ENCODE measurements at regions of chrX and their contacts with region 1.

Region 1: GRCh38 chrX:41734530-41734929 is 10.5 kb downstream of the GPR82 start:
- DNase-seq: no peak
- ATAC-seq: peak; percentile 35
- H3K4me3 Mint-ChIP-seq: peak overlapping the region; percentile 75
- H3K27ac Mint-ChIP-seq: peak overlapping the region; percentile 85
- H3K4me1 Mint-ChIP-seq: peaks cover 41% of the 10 kb centered on the region
- H3K27me3 Mint-ChIP-seq: no peaks in the 10 kb centered on the region
- CTCF ChIP-seq: no peak

Region 2: GRCh38 chrX:40899869-40900268 is 834.7 kb before region 1 on chrX:
- CTCF ChIA-PET with region 1: no interaction called
- POLR2A ChIA-PET with region 1: no interaction called
- intact Hi-C with region 1: no loop called
- DNase-seq: no peak
- ATAC-seq: no peak
- H3K4me3 Mint-ChIP-seq: no peak overlapping the region
- H3K27ac Mint-ChIP-seq: no peak overlapping the region
- H3K4me1 Mint-ChIP-seq: no peaks in the 10 kb centered on the region
- H3K27me3 Mint-ChIP-seq: peaks cover 3% of the 10 kb centered on the region
- CTCF ChIP-seq: no peak

Region 3: DNA sequence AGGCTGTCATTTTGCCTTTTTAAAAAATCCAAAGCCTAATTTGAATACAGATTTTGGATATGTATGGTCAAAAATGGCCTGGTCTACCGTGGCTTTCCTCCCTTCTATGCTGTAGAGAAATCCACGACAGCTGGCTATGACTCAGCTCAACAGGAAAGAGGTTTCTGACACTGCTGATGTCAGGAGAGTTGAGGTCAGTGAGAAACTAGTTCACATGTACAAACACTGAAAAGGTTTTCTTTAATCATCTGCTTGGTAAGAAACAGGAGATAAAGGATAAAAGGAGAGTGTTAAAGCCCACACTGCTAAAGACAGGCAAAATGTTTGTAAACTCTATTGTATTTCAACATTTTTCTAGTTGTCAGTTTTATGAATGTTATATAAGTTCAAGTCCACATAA is 173.5 kb before region 1 on chrX:
- CTCF ChIA-PET with region 1: no interaction called
- POLR2A ChIA-PET with region 1: no interaction called
- intact Hi-C with region 1: loop called (anchors 1 kb)
- DNase-seq: no peak
- ATAC-seq: peak; percentile 57
- H3K4me3 Mint-ChIP-seq: no peak overlapping the region
- H3K27ac Mint-ChIP-seq: no peak overlapping the region
- H3K4me1 Mint-ChIP-seq: peaks cover 20% of the 10 kb centered on the region
- H3K27me3 Mint-ChIP-seq: no peaks in the 10 kb centered on the region
- CTCF ChIP-seq: no peak

Region 4: DNA sequence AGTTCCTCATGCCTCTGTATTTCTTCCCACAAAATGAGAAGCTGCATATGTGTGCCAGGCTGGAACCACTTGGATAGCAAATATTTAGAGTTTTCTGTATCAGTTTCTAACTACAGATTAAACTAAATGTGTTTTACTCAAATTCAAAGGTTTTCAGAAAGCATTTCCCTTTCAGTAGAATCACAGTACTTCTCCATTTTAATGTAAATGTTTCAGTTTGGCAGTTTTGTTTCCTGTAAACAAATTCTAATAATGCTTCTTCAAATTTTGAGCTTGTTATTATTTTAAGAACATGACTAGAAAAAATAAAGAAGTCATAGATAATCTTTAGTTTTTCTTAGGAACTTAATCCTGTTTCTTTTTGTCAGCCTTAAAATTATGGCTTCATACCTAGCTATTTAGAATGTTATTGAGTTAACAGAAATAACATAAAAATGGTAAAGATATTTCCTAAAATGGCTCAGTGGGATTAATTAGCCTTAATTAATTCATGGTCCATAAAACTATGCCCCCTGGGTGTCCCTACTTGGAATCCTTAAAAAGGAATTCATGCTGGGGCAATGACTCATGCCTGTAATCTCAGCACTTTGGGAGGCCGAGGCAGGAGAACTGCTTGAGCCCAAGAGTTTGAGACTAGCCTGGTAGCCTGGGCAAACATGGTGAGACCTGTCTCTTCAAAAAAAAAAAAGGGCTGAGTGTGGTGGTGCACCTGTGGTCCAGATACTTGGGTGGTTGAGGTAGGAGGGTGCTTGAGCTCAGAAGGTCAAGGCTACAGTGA is 129.6 kb before region 1 on chrX:
- CTCF ChIA-PET with region 1: no interaction called
- POLR2A ChIA-PET with region 1: no interaction called
- intact Hi-C with region 1: no loop called
- DNase-seq: no peak
- ATAC-seq: no peak
- H3K4me3 Mint-ChIP-seq: no peak overlapping the region
- H3K27ac Mint-ChIP-seq: peak overlapping the region; percentile 66
- H3K4me1 Mint-ChIP-seq: peaks cover 29% of the 10 kb centered on the region
- H3K27me3 Mint-ChIP-seq: no peaks in the 10 kb centered on the region
- CTCF ChIP-seq: no peak

Region 5: GRCh38 chrX:41670112-41670511 is 64.4 kb before region 1 on chrX:
- CTCF ChIA-PET with region 1: no interaction called
- POLR2A ChIA-PET with region 1: no interaction called
- intact Hi-C with region 1: loop called (anchors 5 kb)
- DNase-seq: no peak
- ATAC-seq: no peak
- H3K4me3 Mint-ChIP-seq: no peak overlapping the region
- H3K27ac Mint-ChIP-seq: no peak overlapping the region
- H3K4me1 Mint-ChIP-seq: peaks cover 10% of the 10 kb centered on the region
- H3K27me3 Mint-ChIP-seq: no peaks in the 10 kb centered on the region
- CTCF ChIP-seq: no peak

Region 6: DNA sequence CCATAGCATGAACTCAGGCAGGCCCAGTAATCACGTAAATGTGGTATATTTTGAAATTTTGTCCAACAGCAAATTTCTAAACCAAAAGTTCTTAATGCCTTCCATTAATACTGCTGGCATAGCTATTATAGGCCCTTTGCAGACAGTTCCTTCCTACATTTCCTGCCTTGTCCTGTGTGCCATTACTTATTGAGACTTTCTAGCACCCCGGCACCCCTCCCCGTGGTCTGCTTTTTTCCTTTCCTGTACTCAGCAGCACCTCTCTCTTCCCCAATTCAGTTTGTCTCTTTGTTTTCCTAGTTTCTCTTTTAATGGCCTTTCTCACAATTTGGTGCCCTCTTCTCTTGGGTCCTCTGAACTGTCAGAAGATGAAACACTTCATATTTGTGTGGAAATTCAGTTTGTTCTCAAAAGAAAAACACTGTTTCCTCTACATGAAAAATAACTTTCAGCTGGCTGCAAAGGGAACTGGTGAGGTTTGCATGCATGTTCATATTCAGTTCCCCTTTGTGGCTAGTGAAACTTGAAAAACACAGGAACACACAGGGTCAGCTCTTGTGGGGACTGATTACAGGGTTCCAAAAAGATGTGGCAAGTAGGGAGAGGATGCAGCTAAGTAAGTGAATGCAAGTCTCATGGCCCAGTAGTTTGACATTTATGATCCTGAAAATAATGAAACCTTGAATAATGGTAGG is 28.7 kb before region 1 on chrX:
- CTCF ChIA-PET with region 1: no interaction called
- POLR2A ChIA-PET with region 1: interaction called, 3 read pairs
- intact Hi-C with region 1: loop called (anchors 1 kb)
- DNase-seq: no peak
- ATAC-seq: peak; percentile 81
- H3K4me3 Mint-ChIP-seq: peak overlapping the region; percentile 72
- H3K27ac Mint-ChIP-seq: peak overlapping the region; percentile 89
- H3K4me1 Mint-ChIP-seq: peaks cover 58% of the 10 kb centered on the region
- H3K27me3 Mint-ChIP-seq: no peaks in the 10 kb centered on the region
- CTCF ChIP-seq: no peak

Region 7: GRCh38 chrX:41759817-41760216 is 25.3 kb after region 1 on chrX:
- CTCF ChIA-PET with region 1: interaction called, 4 read pairs
- POLR2A ChIA-PET with region 1: no interaction called
- intact Hi-C with region 1: loop called (anchors 2 kb)
- DNase-seq: no peak
- ATAC-seq: no peak
- H3K4me3 Mint-ChIP-seq: no peak overlapping the region
- H3K27ac Mint-ChIP-seq: no peak overlapping the region
- H3K4me1 Mint-ChIP-seq: peaks cover 1% of the 10 kb centered on the region
- H3K27me3 Mint-ChIP-seq: no peaks in the 10 kb centered on the region
- CTCF ChIP-seq: no peak